Heart right ventricle (tissue), 16 donors: ENCODE measurements at regions of chr16 and their contacts with region 1.

Region 1: GRCh38 chr16:8229011-8229520 is 361.2 kb downstream of the TMEM114 start:
- DNase-seq: no peak
- ATAC-seq: no peak
- H3K4me3 ChIP-seq: no peak overlapping the region
- H3K27ac ChIP-seq: no peak overlapping the region
- H3K4me1 ChIP-seq: no peaks in the 10 kb centered on the region
- H3K27me3 ChIP-seq: no peaks in the 10 kb centered on the region
- CTCF ChIP-seq: no peak

Region 2: GRCh38 chr16:8283195-8283594 is 54.1 kb after region 1 on chr16:
- intact Hi-C with region 1: loop called in 1 of 10 experiments (anchors 10 kb)
- DNase-seq: no peak
- ATAC-seq: no peak
- H3K4me3 ChIP-seq: no peak overlapping the region
- H3K27ac ChIP-seq: no peak overlapping the region
- H3K4me1 ChIP-seq: no peaks in the 10 kb centered on the region
- H3K27me3 ChIP-seq: no peaks in the 10 kb centered on the region
- CTCF ChIP-seq: no peak